Lower leg skin (tissue), 4 donors: ENCODE measurements at regions of chr19 and their contacts with region 1.

Region 1: GRCh38 chr19:9054765-9055164 is 32.1 kb upstream of the OR1M1 start:
- DNase-seq: peak in 1 of 2 donors; percentile 17
- H3K4me3 ChIP-seq: no peak overlapping the region
- CTCF ChIP-seq: no peak
- POLR2A ChIP-seq: no peak

Region 2: GRCh38 chr19:9004153-9004552 is 50.6 kb before region 1 on chr19:
- intact Hi-C with region 1: no loop called
- DNase-seq: no peak
- H3K4me3 ChIP-seq: no peak overlapping the region
- CTCF ChIP-seq: no peak
- POLR2A ChIP-seq: no peak

Region 3: GRCh38 chr19:9115307-9115813 is 60.6 kb after region 1 on chr19 and contains the start of gene OR7G1:
- intact Hi-C with region 1: no loop called
- DNase-seq: no peak
- H3K4me3 ChIP-seq: no peak within 1 kb of the TSS
- CTCF ChIP-seq: no peak
- POLR2A ChIP-seq: no peak
- total RNA-seq, gene OR7G1: not detected

Region 4: DNA sequence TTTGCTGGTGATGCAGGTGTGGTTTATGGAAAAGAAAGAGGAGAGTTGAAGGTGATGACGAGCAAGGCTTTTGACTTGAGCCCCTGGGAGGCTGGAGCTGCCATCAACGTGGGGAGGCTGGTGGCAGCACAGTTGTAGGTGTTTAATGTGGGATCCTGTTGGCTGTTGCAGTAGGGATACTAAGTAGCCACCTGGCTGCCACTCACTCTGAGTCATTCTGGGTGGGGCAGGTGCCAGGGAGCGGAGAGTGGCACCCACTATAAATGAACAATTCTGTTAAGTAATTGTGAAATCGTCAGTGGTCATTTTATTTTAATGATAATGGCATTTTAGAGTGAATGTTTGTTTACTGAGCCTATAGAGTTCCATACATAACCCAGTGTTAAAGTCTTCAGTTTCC is 95.2 kb after region 1 on chr19:
- intact Hi-C with region 1: no loop called
- DNase-seq: peak in 1 of 2 donors; percentile 42
- H3K4me3 ChIP-seq: no peak overlapping the region
- CTCF ChIP-seq: no peak
- POLR2A ChIP-seq: no peak

Region 5: GRCh38 chr19:9547870-9548269 is 493.1 kb after region 1 on chr19:
- intact Hi-C with region 1: loop called (anchors 5 kb)
- DNase-seq: no peak
- H3K4me3 ChIP-seq: no peak overlapping the region
- CTCF ChIP-seq: no peak
- POLR2A ChIP-seq: no peak